ENCODE measurements at regions of chr1 and their contacts with region 1.

Region 1: GRCh38 chr1:7042322-7043190 is 257.3 kb downstream of the CAMTA1 start:
- DNase-seq: no peak
- H3K4me3 ChIP-seq: no peak overlapping the region
- H3K27ac ChIP-seq: no peak overlapping the region
- H3K4me1 ChIP-seq: no peaks in the 10 kb centered on the region
- H3K27me3 ChIP-seq: peaks cover 8% of the 10 kb centered on the region
- CTCF ChIP-seq: peak in 3 of 4 experiments; percentile 51 to 61 (median 58)
- POLR2A ChIP-seq: no peak

Region 2: GRCh38 chr1:7207875-7208646 is 165.5 kb after region 1 on chr1:
- intact Hi-C with region 1: loop called (anchors 5 kb)
- DNase-seq: no peak
- H3K4me3 ChIP-seq: no peak overlapping the region
- H3K27ac ChIP-seq: no peak overlapping the region
- H3K4me1 ChIP-seq: no peaks in the 10 kb centered on the region
- H3K27me3 ChIP-seq: peaks cover 2% of the 10 kb centered on the region
- CTCF ChIP-seq: peak in 3 of 4 experiments; percentile 32 to 59 (median 40)
- POLR2A ChIP-seq: no peak

Measured in prostate gland (tissue), 2 donors.